ENCODE measurements at regions of chr11 and their contacts with region 1.

Region 1: GRCh38 chr11:73931039-73931645 is 19.7 kb upstream of the DNAJB13 start:
- DNase-seq: peak; percentile 90
- H3K4me3 ChIP-seq: no peak overlapping the region
- H3K27ac ChIP-seq: no peak overlapping the region
- H3K4me1 ChIP-seq: peaks cover 5% of the 10 kb centered on the region
- H3K27me3 ChIP-seq: no peaks in the 10 kb centered on the region
- CTCF ChIP-seq: peak; percentile 74

Region 2: GRCh38 chr11:73404048-73404447 is 527.1 kb before region 1 on chr11:
- CTCF ChIA-PET with region 1: no interaction called
- POLR2A ChIA-PET with region 1: no interaction called
- intact Hi-C with region 1: loop called (anchors 5 kb)
- DNase-seq: peak; percentile 81
- H3K4me3 ChIP-seq: no peak overlapping the region
- H3K27ac ChIP-seq: no peak overlapping the region
- H3K4me1 ChIP-seq: no peaks in the 10 kb centered on the region
- H3K27me3 ChIP-seq: no peaks in the 10 kb centered on the region
- CTCF ChIP-seq: peak; percentile 76

Region 3: GRCh38 chr11:73625696-73626318 is 305.3 kb before region 1 on chr11:
- CTCF ChIA-PET with region 1: interaction called, 39 read pairs
- POLR2A ChIA-PET with region 1: no interaction called
- intact Hi-C with region 1: loop called (anchors 1 kb)
- DNase-seq: peak; percentile 87
- H3K4me3 ChIP-seq: peak overlapping the region; percentile 20
- H3K27ac ChIP-seq: no peak overlapping the region
- H3K4me1 ChIP-seq: no peaks in the 10 kb centered on the region
- H3K27me3 ChIP-seq: no peaks in the 10 kb centered on the region
- CTCF ChIP-seq: peak; percentile 94

Region 4: GRCh38 chr11:74453373-74453975 is 522.3 kb after region 1 on chr11:
- CTCF ChIA-PET with region 1: no interaction called
- POLR2A ChIA-PET with region 1: no interaction called
- intact Hi-C with region 1: no loop called
- DNase-seq: peak; percentile 85
- H3K4me3 ChIP-seq: no peak overlapping the region
- H3K27ac ChIP-seq: no peak overlapping the region
- H3K4me1 ChIP-seq: peaks cover 13% of the 10 kb centered on the region
- H3K27me3 ChIP-seq: no peaks in the 10 kb centered on the region
- CTCF ChIP-seq: peak; percentile 95